Mammary epithelial cell (primary cell): ENCODE measurements at regions of chr2 and their contacts with region 1.

Region 1: DNA sequence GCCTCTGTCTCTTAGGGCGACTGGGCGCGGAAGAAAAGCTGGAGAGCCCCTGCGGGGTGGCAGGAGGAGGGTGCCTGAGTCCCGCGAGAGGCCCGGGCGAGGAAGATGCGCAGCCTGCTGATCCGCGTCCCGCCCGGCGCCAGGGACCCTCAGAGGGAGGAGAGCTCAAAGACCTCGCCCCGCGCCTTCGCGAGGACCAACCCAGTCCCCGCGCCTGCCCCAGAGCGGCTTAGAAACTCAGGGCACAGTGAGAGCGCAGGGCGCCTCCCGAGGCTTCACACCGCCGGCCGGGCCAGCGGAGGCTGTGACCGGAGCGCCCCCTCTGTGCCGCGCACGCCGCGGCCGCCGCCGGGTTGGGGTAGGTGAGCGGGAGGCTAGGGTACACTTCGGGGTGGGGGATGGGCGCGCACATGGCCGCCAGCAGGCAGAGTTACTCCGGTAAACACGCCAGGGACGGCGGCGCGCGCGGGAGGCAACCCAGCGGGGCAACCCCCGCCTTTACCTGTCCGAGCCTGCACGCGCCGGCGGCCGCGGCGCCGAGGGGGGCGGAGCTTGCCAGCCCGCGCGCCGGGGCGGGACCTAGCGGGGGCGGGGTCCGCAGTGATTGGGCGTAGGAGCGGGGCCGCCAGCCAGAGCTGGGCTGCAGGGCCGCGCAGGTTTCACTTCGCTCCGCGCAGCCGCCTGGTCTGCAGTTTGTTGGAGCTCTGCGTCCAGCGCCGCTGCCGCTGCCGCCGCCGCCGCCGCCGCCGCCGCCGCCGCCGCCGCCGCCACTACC is at the start of gene BCL2L11:
- DNase-seq: peak; percentile 89
- H3K4me3 ChIP-seq: peak within 1 kb of the TSS; percentile 72 to 92 (median 78)
- H3K27ac ChIP-seq: peak within 1 kb of the TSS; percentile 81
- H3K4me1 ChIP-seq: peaks cover 30% of the 10 kb centered on the region
- H3K27me3 ChIP-seq: no peaks in the 10 kb centered on the region
- CTCF ChIP-seq: peak in 1 of 2 donors; percentile 26
- total RNA-seq, gene BCL2L11: 7.3 to 9.7 TPM

Region 2: DNA sequence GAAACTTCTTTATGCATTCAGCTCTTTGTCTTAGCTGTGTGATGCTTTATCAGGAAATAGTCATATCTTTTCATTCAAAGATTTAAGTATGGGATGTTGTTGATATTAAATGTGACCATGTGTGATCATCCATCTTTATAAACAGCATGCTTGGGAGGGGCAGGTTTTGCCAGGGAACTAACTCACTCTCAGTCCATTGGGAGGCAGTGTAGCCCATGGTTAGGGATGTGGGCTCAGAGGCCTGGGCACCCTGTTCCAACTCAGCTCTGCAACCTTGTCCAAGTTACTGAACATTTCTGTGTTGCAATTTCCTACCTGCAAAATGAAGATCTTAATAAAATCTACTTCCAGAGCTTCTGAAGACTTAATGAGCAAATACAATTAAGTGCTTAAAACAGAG is 91.7 kb before region 1 on chr2:
- CTCF ChIA-PET with region 1: no interaction called
- dilution Hi-C with region 1: no loop called
- in situ Hi-C with region 1: no loop called
- intact Hi-C with region 1: loop called (anchors 2 kb)
- DNase-seq: peak; percentile 23
- H3K4me3 ChIP-seq: no peak overlapping the region
- H3K27ac ChIP-seq: no peak overlapping the region
- H3K4me1 ChIP-seq: peaks cover 13% of the 10 kb centered on the region
- H3K27me3 ChIP-seq: no peaks in the 10 kb centered on the region
- CTCF ChIP-seq: peak; percentile 35 to 51

Region 3: GRCh38 chr2:111236025-111236424 is 115.6 kb after region 1 on chr2:
- CTCF ChIA-PET with region 1: no interaction called
- dilution Hi-C with region 1: no loop called
- in situ Hi-C with region 1: no loop called
- intact Hi-C with region 1: loop called (anchors 2 kb)
- DNase-seq: peak; percentile 91
- H3K4me3 ChIP-seq: no peak overlapping the region
- H3K27ac ChIP-seq: no peak overlapping the region
- H3K4me1 ChIP-seq: peaks cover 20% of the 10 kb centered on the region
- H3K27me3 ChIP-seq: no peaks in the 10 kb centered on the region
- CTCF ChIP-seq: no peak

Region 4: GRCh38 chr2:111667542-111668273 is 547.3 kb after region 1 on chr2:
- CTCF ChIA-PET with region 1: no interaction called
- dilution Hi-C with region 1: no loop called
- in situ Hi-C with region 1: no loop called
- intact Hi-C with region 1: loop called (anchors 1 kb)
- DNase-seq: peak; percentile 60
- H3K4me3 ChIP-seq: no peak overlapping the region
- H3K27ac ChIP-seq: no peak overlapping the region
- H3K4me1 ChIP-seq: peaks cover 8% of the 10 kb centered on the region
- H3K27me3 ChIP-seq: no peaks in the 10 kb centered on the region
- CTCF ChIP-seq: peak; percentile 66 to 76